CD4-positive, alpha-beta memory T cell (primary cell): ENCODE measurements at regions of chr15 and their contacts with region 1.

Region 1: DNA sequence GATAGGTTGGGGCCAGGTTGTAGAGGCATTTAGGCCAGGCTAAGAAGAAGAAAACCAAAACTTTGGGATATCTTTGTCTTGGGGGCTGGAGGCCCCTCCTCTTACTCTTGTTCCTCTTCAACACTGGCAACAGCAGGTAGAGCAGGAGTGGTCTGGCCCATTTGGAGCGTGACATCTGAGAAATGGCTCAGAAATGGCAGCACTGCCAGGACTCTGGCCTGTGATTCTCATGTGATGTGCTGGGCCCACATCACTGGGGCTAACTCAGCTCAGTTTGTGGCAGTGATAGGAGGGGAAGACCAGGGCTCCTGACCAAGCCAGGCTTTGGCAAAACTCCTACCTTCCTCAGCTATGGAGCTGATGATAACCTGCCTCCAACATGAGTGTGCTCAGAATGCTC is 18.5 kb downstream of the PATL2 start:
- DNase-seq: no peak
- H3K4me3 ChIP-seq: no peak overlapping the region
- H3K4me3 Mint-ChIP-seq: no peak overlapping the region
- H3K27ac ChIP-seq: no peak overlapping the region
- H3K27ac Mint-ChIP-seq: peak overlapping the region in 2 of 7 donors; percentile 17 to 42
- H3K4me1 ChIP-seq: peaks cover 25% of the 10 kb centered on the region
- H3K4me1 Mint-ChIP-seq: peaks cover 28 to 45% (median 38%) of the 10 kb centered on the region in 4 donors
- H3K27me3 ChIP-seq: no peaks in the 10 kb centered on the region
- H3K27me3 Mint-ChIP-seq: no peaks in the 10 kb centered on the region

Region 2: DNA sequence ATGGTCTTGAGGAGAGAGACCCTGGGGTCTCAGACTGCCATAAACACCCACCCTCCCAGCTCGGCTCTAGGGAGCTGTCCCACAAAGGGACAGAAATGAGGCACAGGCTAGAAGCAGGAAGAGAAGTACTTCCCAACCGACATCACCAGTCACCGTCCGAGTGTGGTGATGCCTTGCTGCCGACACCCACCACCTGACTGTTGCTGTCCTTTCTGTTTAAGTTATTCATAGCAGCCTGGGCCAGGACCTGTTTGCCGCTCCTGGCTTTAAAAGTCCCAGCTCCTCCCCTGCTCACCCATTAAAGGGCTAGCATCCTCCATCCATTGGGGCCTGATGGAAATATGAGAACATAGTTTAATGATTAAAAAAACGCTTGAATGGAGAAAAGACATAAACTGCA is 16.0 kb before region 1 on chr15:
- CTCF ChIA-PET with region 1: interaction called, 6 read pairs
- POLR2A ChIA-PET with region 1: interaction called, 1,003 read pairs
- intact Hi-C with region 1: loop called (anchors 2 kb)
- DNase-seq: peak in 1 of 5 donors; percentile 22
- H3K4me3 ChIP-seq: peak overlapping the region; percentile 10 to 23
- H3K4me3 Mint-ChIP-seq: peak overlapping the region; percentile 45 to 88 (median 82)
- H3K27ac ChIP-seq: peak overlapping the region; percentile 39
- H3K27ac Mint-ChIP-seq: peak overlapping the region; percentile 87 to 97 (median 95)
- H3K4me1 ChIP-seq: peaks cover 100% of the 10 kb centered on the region
- H3K4me1 Mint-ChIP-seq: peaks cover 67 to 95% (median 86%) of the 10 kb centered on the region in 4 donors
- H3K27me3 ChIP-seq: no peaks in the 10 kb centered on the region
- H3K27me3 Mint-ChIP-seq: no peaks in the 10 kb centered on the region

Region 3: GRCh38 chr15:44682211-44682610 is 10.4 kb before region 1 on chr15:
- CTCF ChIA-PET with region 1: interaction called, 6 read pairs
- POLR2A ChIA-PET with region 1: interaction called, 75 read pairs
- intact Hi-C with region 1: loop called (anchors 2 kb)
- DNase-seq: no peak
- H3K4me3 ChIP-seq: peak overlapping the region in 1 of 2 donors; percentile 13
- H3K4me3 Mint-ChIP-seq: peak overlapping the region in 7 of 8 donors; percentile 64 to 82 (median 75)
- H3K27ac ChIP-seq: peak overlapping the region; percentile 70
- H3K27ac Mint-ChIP-seq: peak overlapping the region; percentile 86 to 96 (median 93)
- H3K4me1 ChIP-seq: peaks cover 75% of the 10 kb centered on the region
- H3K4me1 Mint-ChIP-seq: peaks cover 66 to 99% (median 83%) of the 10 kb centered on the region in 4 donors
- H3K27me3 ChIP-seq: no peaks in the 10 kb centered on the region
- H3K27me3 Mint-ChIP-seq: no peaks in the 10 kb centered on the region